ENCODE measurements at regions of chr14 and their contacts with region 1.

Region 1: GRCh38 chr14:69288011-69288771 is 28.2 kb downstream of the GALNT16 start:
- DNase-seq: no peak

Region 2: GRCh38 chr14:69260861-69261564 is 27.2 kb before region 1 on chr14:
- CTCF ChIA-PET with region 1: interaction called, 13 read pairs
- POLR2A ChIA-PET with region 1: no interaction called
- DNase-seq: peak; percentile 82

Region 3: GRCh38 chr14:69451956-69452355 is 163.8 kb after region 1 on chr14:
- CTCF ChIA-PET with region 1: no interaction called
- POLR2A ChIA-PET with region 1: no interaction called
- DNase-seq: no peak

Measured in HEK293T (cell line).